ENCODE measurements at regions of chr7 and their contacts with region 1.

Region 1: GRCh38 chr7:43700059-43700501 is 29.2 kb downstream of the COA1 start:
- DNase-seq: no peak
- H3K4me3 Mint-ChIP-seq: no peak overlapping the region
- H3K27ac Mint-ChIP-seq: no peak overlapping the region
- H3K4me1 Mint-ChIP-seq: peaks cover 40% of the 10 kb centered on the region
- H3K27me3 Mint-ChIP-seq: no peaks in the 10 kb centered on the region

Region 2: DNA sequence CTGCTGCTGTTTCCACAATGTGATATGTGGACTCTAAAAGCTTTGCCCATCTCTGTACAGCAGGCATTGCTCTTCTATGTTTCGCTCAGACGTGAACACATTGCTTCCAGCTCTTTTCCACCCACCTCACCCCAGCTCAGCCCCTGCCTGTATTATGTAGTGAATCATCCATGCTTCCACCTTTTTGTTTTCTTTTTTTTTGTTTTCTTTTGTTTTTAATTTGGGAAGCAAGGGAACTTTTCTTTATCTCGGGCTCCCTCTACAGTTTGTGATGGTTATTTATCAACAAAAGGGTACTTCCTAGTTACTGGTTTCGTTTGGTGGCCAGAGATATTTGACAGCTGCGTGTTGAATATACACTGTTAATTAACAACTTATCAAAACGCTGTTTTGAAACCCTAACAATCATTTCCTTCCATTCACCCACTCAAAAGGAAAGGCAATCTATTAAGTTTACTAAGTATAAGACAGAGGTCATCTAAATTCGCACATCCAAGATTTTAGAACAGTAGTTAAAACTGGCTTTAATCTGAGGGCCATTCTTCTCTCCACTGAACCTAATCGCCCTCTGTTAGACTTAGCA is 245.1 kb before region 1 on chr7:
- CTCF ChIA-PET with region 1: no interaction called
- intact Hi-C with region 1: loop called (anchors 2 kb)
- DNase-seq: no peak
- H3K4me3 Mint-ChIP-seq: no peak overlapping the region
- H3K27ac Mint-ChIP-seq: no peak overlapping the region
- H3K4me1 Mint-ChIP-seq: no peaks in the 10 kb centered on the region
- H3K27me3 Mint-ChIP-seq: no peaks in the 10 kb centered on the region

Region 3: DNA sequence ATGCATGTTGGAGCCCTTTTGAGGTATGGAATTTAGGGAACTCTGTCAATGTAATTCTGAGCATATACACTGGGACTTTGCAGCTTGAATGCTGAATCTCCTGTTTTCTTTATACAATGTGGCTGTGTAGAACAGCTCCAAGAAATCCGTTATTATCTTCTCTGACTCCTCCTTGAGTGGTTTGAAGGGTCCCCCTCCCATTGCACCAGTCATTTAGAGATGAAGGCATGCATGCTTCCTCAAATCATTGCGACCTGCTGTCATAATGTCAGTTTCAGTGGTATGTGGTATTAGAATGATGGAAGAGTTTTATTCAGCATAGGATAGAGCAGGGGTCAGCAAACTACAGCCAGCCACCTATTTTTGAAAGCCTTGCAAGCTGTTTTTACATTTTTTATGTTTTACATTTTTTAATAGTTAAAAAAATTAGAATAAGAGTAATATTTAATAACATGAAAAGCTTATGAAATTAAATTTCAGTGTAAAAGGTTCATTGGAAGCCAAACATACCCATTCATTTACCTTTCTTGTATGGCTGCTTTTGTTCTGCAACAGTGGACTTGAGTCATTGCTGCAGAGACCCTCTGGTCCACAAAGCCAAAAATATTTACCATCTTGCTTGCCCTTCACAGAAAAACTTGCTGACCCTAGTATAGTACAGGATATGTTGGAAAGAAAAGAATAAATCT is 109.1 kb before region 1 on chr7:
- CTCF ChIA-PET with region 1: interaction called, 388 read pairs
- intact Hi-C with region 1: no loop called
- DNase-seq: peak; percentile 73
- H3K4me3 Mint-ChIP-seq: peak overlapping the region; percentile 37
- H3K27ac Mint-ChIP-seq: peak overlapping the region; percentile 39
- H3K4me1 Mint-ChIP-seq: peaks cover 81% of the 10 kb centered on the region
- H3K27me3 Mint-ChIP-seq: no peaks in the 10 kb centered on the region

Region 4: DNA sequence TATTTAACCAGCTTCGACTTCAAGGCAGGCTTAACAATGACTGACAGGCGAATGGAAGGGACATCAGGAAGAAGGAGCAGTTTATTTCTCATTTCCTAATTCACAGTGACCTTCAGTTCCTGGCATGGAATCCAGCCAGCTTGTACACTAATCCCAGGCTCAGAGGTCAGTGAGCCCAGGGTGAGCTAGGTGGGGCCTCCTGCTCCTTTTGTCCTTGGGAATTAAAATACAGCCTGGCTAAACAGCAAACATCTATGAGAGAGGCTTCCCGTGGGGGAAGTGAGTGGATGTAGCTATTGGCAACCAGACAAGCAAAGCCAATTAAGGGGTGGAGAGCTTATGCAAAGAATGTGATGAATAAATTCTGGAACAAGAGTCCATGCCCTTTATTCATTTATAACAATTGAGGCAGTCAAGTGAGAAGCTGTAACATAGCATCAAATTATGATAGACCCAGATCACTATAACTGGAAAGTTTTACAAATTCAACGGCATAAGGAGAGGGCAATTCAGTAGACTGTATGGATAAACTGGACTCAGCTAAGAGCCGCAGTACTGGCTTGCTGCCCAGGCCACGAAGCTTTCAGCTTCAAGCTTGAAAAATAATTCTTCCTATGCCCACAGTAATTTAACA is 60.1 kb before region 1 on chr7:
- CTCF ChIA-PET with region 1: interaction called, 22 read pairs
- intact Hi-C with region 1: no loop called
- DNase-seq: no peak
- H3K4me3 Mint-ChIP-seq: no peak overlapping the region
- H3K27ac Mint-ChIP-seq: peak overlapping the region; percentile 65
- H3K4me1 Mint-ChIP-seq: peaks cover 83% of the 10 kb centered on the region
- H3K27me3 Mint-ChIP-seq: no peaks in the 10 kb centered on the region

Region 5: GRCh38 chr7:43669286-43670081 is 30.6 kb before region 1 on chr7:
- CTCF ChIA-PET with region 1: interaction called, 14 read pairs
- intact Hi-C with region 1: no loop called
- DNase-seq: peak; percentile 90
- H3K4me3 Mint-ChIP-seq: peak overlapping the region; percentile 71
- H3K27ac Mint-ChIP-seq: peak overlapping the region; percentile 96
- H3K4me1 Mint-ChIP-seq: peaks cover 87% of the 10 kb centered on the region
- H3K27me3 Mint-ChIP-seq: no peaks in the 10 kb centered on the region

Region 6: DNA sequence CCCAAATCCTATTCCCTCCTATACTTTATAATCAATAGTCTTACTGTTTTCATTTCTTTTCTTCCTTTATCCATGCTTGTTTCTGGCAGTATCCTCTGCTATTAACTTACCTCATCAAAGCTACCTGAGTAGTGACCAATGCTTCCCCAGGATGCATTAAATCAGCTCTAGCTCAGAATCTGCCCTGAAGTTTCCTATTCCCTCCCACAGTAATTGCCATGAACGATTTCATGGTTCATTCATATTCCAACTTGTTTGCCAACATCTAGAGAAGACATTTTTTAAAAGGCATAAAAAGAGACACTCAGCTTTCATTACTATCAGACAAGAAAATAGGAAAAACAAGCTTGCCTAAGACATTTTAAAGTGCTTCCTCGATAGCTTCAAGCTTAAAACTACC is 13.1 kb before region 1 on chr7:
- CTCF ChIA-PET with region 1: interaction called, 17 read pairs
- intact Hi-C with region 1: no loop called
- DNase-seq: no peak
- H3K4me3 Mint-ChIP-seq: no peak overlapping the region
- H3K27ac Mint-ChIP-seq: no peak overlapping the region
- H3K4me1 Mint-ChIP-seq: peaks cover 61% of the 10 kb centered on the region
- H3K27me3 Mint-ChIP-seq: no peaks in the 10 kb centered on the region

Region 7: GRCh38 chr7:43721193-43721806 is 21.2 kb after region 1 on chr7:
- CTCF ChIA-PET with region 1: interaction called, 24 read pairs
- intact Hi-C with region 1: loop called (anchors 1 kb)
- DNase-seq: no peak
- H3K4me3 Mint-ChIP-seq: no peak overlapping the region
- H3K27ac Mint-ChIP-seq: no peak overlapping the region
- H3K4me1 Mint-ChIP-seq: peaks cover 46% of the 10 kb centered on the region
- H3K27me3 Mint-ChIP-seq: no peaks in the 10 kb centered on the region

Region 8: DNA sequence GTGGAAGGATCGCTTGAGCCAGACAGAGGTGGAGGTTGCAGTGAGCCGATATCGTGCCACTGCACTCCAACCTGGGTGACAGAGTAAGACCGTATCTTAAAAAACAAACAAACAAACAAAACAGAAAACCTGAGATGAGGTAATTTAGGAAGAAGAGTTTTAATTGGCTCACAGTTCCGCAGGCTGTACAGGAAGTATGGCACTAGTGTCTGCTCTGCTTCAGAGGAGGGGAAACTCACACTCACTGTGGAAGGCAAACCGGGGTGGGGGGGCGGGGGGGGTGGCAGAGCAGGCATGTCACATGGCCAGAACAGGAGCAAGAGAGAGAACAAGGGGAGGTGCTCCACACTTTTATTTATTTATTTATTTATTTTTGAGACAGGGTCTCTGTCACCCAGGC is 231.3 kb after region 1 on chr7:
- CTCF ChIA-PET with region 1: no interaction called
- intact Hi-C with region 1: no loop called
- DNase-seq: peak; percentile 15
- H3K4me3 Mint-ChIP-seq: peak overlapping the region; percentile 33
- H3K27ac Mint-ChIP-seq: no peak overlapping the region
- H3K4me1 Mint-ChIP-seq: peaks cover 23% of the 10 kb centered on the region
- H3K27me3 Mint-ChIP-seq: no peaks in the 10 kb centered on the region

Measured in activated naive CD4-positive, alpha-beta T cell treated with anti-CD3 and anti-CD28 coated beads for 36 hours (primary cell).